Panc1 (cell line): ENCODE measurements at regions of chr1 and their contacts with region 1.

Region 1: DNA sequence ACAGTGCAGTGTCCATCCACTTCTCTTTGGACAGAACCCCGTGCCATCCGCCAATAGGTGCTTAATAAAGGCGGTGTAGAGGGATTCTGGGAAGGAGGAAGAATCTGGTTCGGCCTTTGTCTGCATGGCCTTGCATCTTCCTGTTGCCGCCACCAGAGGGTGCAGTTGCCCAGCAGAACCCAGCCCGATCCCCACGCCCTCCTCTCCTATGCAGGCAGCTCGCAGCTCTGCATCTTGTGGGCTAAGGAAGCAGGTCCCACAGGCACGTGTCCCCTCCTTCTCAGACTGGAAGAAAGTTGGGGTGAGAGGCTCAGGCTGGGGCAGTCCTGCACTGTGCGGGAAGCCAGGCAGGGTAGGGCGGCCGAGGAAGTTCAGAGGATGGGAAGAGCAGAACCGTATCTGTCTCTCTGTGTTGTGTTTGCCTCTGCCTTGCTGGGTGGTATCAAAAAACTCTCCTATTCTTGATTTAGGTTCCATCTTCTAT is 20.8 kb downstream of the NAV1 start:
- DNase-seq: peak; percentile 63
- ATAC-seq: peak; percentile 98
- H3K4me3 ChIP-seq: no peak overlapping the region
- H3K27ac ChIP-seq: no peak overlapping the region
- H3K4me1 ChIP-seq: no peaks in the 10 kb centered on the region
- H3K27me3 ChIP-seq: no peaks in the 10 kb centered on the region
- CTCF ChIP-seq: peak; percentile 92

Region 2: DNA sequence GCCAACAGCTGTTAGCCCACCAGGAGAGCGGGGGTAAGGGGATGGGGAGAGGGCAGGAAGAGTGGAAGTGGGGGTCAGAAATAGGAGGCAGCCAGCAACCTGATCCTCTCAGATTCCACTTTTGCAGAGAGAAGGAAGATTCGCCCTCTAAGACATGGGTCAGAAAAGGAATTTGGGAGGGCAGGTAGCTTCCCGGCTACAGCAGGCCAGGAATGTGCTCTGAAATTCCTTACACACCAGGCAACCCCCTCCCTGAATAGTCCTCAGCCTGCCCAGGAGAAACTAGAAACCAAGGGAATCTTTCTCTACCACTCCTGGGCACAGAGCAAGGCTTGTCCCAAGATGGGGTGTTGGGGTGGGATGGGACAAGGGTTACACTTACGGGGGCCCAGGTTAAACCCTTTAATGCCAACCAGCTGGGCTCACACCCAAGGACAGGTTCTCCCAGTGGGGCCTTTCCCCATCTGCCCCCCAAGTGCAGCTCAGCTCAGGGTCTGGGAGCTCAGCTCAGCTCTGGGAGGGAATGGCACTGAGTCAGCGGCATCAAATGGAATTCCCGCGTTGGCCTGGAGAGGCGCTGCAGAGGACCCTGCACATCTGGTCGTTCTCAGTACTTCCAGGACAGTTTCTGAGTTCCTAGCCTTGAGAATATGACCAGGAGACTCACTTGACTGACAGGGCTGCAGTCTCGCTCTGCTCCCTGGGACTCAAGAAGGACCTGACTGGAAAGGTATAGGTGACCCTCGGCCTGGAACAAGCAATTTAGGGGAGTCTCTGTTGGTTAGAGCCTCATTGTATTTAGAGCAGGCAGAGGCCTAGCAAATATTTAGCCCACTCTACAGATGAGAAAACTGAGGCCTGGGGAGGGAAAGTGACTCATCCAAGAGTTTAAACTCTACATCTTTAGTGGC is 183.0 kb before region 1 on chr1:
- CTCF ChIA-PET with region 1: no interaction called
- POLR2A ChIA-PET with region 1: no interaction called
- in situ Hi-C with region 1: no loop called
- intact Hi-C with region 1: no loop called
- DNase-seq: no peak
- ATAC-seq: no peak
- H3K4me3 ChIP-seq: no peak overlapping the region
- H3K27ac ChIP-seq: no peak overlapping the region
- H3K4me1 ChIP-seq: no peaks in the 10 kb centered on the region
- H3K27me3 ChIP-seq: peaks cover 10% of the 10 kb centered on the region; the same call in 1 of the 2 replicates
- CTCF ChIP-seq: peak; percentile 67

Region 3: GRCh38 chr1:201792534-201793305 is 233.0 kb after region 1 on chr1:
- CTCF ChIA-PET with region 1: interaction called, 9 read pairs
- POLR2A ChIA-PET with region 1: no interaction called
- in situ Hi-C with region 1: no loop called
- intact Hi-C with region 1: loop called (anchors 1 kb)
- DNase-seq: peak; percentile 80
- ATAC-seq: peak; percentile 96
- H3K4me3 ChIP-seq: no peak overlapping the region
- H3K27ac ChIP-seq: no peak overlapping the region
- H3K4me1 ChIP-seq: peaks cover 4% of the 10 kb centered on the region; the same call in 1 of the 2 replicates
- H3K27me3 ChIP-seq: no peaks in the 10 kb centered on the region
- CTCF ChIP-seq: peak; percentile 96